Left ventricle myocardium superior (tissue), 1 donor: ENCODE measurements at regions of chr6 and their contacts with region 1.

Region 1: GRCh38 chr6:116971959-116972358 is 94.9 kb downstream of the RFX6 start:
- DNase-seq: no peak
- ATAC-seq: no peak

Region 2: DNA sequence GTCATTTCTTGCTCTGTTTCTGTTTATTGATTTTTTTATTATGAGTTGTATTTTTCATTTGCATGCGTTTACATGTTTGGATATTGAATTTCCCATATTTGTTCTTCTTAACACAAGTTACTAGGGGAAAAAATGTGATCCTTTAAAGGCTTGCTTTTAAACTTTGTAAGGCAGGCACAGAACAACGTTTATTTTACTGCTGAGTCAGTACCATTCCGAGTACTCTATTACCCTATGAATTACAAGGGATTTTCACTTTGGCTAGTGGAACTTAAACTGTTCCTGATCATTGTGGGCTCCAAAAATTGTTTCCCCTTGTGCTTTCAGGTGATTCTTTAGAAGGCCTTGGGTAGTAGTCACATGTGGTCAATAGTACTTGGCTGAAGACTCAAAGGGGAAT is 235.0 kb before region 1 on chr6:
- intact Hi-C with region 1: no loop called
- DNase-seq: no peak
- ATAC-seq: no peak

Region 3: DNA sequence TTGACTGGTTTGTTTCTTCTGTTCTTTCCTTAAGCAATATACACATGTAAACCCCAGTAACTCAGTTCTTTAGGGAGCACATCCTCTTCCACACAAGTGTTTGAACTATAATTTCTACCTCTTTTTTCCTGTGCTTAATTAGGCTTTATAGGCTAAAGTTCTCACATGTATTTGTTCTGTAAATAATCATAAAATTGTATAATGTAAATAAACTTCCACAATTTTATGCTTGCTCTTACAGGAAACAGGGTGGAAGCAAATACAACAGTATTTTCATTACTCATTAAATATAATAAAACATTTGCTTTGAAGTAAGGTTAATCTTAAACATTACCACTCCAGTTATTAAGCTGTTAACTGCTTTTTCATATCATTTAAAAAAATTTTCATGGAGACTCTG is 170.0 kb before region 1 on chr6:
- intact Hi-C with region 1: no loop called
- DNase-seq: no peak
- ATAC-seq: no peak

Region 4: DNA sequence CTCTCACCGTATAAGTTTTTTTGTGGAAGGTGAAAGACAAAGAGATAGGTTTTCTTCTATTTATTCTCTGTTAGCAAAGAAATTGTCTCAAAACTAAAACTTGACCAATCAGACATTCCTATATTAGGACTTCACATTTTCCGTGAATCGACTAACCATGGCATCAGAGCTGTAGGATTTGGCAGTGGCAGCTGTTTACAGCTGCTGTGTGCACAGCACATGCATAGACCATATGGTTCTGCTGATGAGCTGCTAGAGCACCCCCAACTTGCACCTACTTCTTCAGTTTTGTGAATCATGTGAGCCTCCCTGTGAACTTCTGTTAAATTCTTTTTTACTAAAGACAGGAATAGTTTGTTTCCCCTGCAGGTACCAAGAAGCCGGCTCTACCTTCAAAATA is 63.0 kb after region 1 on chr6:
- intact Hi-C with region 1: no loop called
- DNase-seq: no peak
- ATAC-seq: no peak

Region 5: DNA sequence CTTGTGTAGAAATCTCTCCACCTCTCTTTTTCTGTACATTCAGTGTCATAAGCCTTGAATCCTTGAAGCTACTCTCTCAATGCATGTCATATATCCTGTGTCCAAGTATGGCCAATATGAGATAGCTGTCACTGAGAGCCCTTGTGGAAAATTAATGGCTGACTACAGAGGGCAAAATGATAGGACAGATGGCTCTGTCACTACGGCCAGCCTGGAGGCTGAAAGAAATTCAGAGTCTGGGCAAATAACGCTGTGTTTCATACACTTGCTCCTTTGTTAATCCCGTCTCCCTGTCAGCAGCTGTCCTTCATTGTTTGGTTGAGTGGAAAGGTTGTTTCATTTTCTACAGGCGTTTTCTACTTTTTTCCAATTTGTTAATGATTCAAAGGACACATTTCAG is 223.0 kb after region 1 on chr6:
- intact Hi-C with region 1: loop called (anchors 10 kb)
- DNase-seq: no peak
- ATAC-seq: no peak

Region 6: DNA sequence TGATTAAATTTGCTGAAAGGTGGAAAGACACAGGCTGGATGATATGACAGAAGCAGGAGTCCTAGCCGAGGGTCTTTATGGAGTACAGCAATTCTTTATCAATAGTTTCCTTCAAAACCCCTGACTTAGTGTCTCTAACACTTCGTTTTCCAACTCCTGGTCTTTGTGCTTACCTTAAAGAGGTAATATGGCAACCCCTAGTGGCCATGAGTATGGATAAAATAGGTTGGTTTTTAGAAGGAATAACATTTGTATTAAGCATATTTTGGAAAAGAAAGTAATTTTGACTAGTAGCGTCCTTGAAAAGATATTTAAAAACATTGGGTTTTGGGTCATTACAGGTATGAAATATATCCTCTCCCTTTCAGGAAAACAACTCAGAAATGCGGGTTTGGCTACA is 345.3 kb after region 1 on chr6:
- intact Hi-C with region 1: loop called (anchors 5 kb)
- DNase-seq: no peak
- ATAC-seq: no peak